AG04449 (cell line): ENCODE measurements at regions of chr22 and their contacts with region 1.

Region 1: GRCh38 chr22:36162127-36163034 is 1.8 kb upstream of the APOL3 start:
- DNase-seq: no peak
- H3K4me3 ChIP-seq: no peak overlapping the region
- CTCF ChIP-seq: no peak

Region 2: GRCh38 chr22:36144886-36145541 is 17.4 kb before region 1 on chr22:
- CTCF ChIA-PET with region 1: interaction called, 18 read pairs
- POLR2A ChIA-PET with region 1: no interaction called
- DNase-seq: no peak
- H3K4me3 ChIP-seq: no peak overlapping the region
- CTCF ChIP-seq: peak; percentile 72